Heart right ventricle (tissue), 16 donors: ENCODE measurements at regions of chr7 and their contacts with region 1.

Region 1: GRCh38 chr7:151459726-151460473 is 20.0 kb upstream of the CRYGN start:
- DNase-seq: peak; percentile 71 to 79
- ATAC-seq: peak; percentile 81 to 93 (median 89)
- H3K4me3 ChIP-seq: peak overlapping the region in 8 of 10 donors; percentile 6 to 33 (median 24)
- H3K27ac ChIP-seq: peak overlapping the region; percentile 85 to 93 (median 90)
- H3K4me1 ChIP-seq: peaks cover 16 to 33% (median 24%) of the 10 kb centered on the region in 9 donors
- H3K27me3 ChIP-seq: no peaks in the 10 kb centered on the region
- CTCF ChIP-seq: peak in 6 of 9 donors; percentile 21 to 54 (median 40)

Region 2: DNA sequence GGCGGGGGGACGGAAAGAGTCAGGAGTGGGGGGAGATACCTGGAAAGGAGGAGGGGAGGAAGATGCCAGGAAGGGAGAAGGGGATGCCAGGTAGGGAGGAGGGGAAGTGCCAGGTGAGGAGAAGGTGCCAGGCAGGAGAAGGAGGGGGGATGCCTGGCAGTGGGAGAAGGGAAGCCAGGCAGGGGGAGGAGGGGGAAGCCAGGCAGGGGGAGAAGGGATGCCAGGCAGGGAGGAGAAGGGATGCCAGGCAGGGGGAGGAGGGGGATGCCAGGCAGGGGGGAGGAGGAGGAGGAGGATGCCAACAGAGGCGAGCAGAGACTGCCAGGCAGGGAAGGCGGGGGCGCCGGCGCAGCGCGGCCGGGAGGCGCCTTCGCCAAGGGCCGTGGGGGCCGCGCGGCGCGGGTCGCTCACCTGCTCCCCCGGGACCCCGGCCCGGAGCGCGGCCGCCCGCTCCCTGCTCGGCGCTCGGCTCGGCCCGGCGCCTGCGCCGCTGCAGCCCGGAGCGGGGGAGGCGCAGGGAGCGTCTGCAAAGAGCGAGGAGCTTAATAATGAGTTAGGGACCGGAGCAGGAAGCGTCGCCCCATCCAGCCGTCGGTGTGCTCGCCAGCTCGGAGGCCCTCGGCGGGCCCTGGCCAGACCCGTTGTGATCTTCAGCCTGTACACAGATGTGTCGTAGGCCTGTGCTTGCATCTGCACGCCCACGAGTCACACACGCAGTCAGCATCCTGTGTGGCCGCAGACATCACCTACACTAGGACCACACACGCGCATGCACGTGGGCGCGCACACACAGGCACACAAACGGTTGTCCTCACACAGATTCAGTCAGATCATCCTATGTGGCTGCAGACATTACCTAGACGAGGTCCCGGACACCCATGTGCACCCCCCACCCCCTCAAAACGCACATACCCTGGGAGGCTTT is 183.0 kb before region 1 on chr7:
- intact Hi-C with region 1: no loop called
- DNase-seq: peak; percentile 42 to 51
- ATAC-seq: peak; percentile 42 to 85 (median 67)
- H3K4me3 ChIP-seq: peak overlapping the region in 9 of 10 donors; percentile 33 to 55 (median 46)
- H3K27ac ChIP-seq: no peak overlapping the region
- H3K4me1 ChIP-seq: peaks cover 0 to 33% (median 8%) of the 10 kb centered on the region in 9 donors
- H3K27me3 ChIP-seq: peaks cover 0 to 24% (median 9%) of the 10 kb centered on the region in 7 donors
- CTCF ChIP-seq: no peak

Region 3: DNA sequence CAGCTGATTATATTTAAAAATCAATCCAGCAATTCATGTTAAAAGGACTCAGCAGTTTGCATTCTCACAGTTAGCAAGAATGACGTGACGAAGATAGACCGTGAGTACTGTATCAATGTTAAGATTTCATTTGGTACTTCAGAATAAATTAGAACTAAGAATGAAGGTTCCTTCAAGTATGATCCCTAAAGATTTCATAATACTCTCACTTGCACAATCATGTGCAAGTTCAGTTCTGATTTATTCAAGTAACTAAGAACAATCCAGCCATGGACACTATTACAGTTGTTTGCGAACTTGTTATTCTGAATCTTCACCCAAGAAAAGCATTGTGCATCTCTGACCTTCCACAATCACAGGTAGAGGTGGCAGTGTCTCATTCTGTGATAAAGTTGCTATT is 52.0 kb after region 1 on chr7:
- intact Hi-C with region 1: loop called in 6 of 10 experiments (anchors 5 to 10 kb)
- DNase-seq: no peak
- ATAC-seq: peak in 1 of 8 donors; percentile 17
- H3K4me3 ChIP-seq: no peak overlapping the region
- H3K27ac ChIP-seq: peak overlapping the region in 3 of 10 donors; percentile 3 to 49 (median 6)
- H3K4me1 ChIP-seq: peaks cover 8 to 99% (median 84%) of the 10 kb centered on the region in 9 donors
- H3K27me3 ChIP-seq: no peaks in the 10 kb centered on the region
- CTCF ChIP-seq: no peak

Region 4: DNA sequence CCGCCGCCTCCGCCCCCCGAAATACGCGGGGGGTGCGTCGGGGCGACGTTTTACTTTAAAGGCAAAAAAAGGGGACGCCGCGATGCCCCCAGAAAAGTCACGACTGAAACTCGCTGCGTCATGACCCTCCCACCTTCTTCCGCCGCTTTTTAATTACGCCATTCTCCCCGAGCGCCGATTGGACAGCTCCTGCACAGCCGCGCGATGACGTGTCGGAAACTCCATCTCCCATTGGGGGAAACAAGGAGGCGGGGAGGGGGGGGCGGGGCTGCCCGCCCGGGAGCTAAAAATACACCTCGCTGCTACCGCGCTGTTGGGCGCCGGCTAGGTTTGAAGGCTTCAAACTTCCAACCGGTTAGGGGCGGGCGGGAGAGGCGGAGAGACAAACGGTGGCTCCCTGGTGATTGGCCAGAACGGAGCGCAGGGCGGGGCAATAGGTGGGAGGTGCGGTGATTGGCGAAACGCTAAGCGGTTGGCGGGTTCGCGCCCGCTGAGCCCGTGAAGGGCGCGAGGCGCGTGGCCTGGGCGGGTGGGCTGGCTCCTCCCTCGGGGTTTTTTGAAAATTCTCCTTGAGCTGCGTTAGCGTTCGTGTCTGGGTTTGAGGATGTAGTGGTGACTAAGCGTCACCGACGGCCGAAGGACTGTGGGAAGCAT is 60.0 kb after region 1 on chr7 and contains the start of gene RHEB:
- intact Hi-C with region 1: loop called in 6 of 10 experiments (anchors 2 to 10 kb)
- DNase-seq: peak; percentile 98 to 99
- ATAC-seq: peak; percentile 93 to 97 (median 97)
- H3K4me3 ChIP-seq: peak within 1 kb of the TSS; percentile 69 to 84 (median 76)
- H3K27ac ChIP-seq: peak within 1 kb of the TSS; percentile 87 to 99 (median 98)
- H3K4me1 ChIP-seq: peaks cover 2 to 45% (median 41%) of the 10 kb centered on the region in 9 donors
- H3K27me3 ChIP-seq: no peaks in the 10 kb centered on the region
- CTCF ChIP-seq: peak in 1 of 9 donors; percentile 3
- total RNA-seq, gene RHEB: 87.0 to 166 (median 104) TPM

Region 5: GRCh38 chr7:151754142-151754590 is 294.3 kb after region 1 on chr7:
- intact Hi-C with region 1: loop called in 5 of 10 experiments (anchors 5 to 10 kb)
- DNase-seq: peak; percentile 80 to 81
- ATAC-seq: peak; percentile 86 to 95 (median 91)
- H3K4me3 ChIP-seq: no peak overlapping the region
- H3K27ac ChIP-seq: peak overlapping the region; percentile 5 to 88 (median 78)
- H3K4me1 ChIP-seq: peaks cover 12 to 41% (median 25%) of the 10 kb centered on the region in 9 donors
- H3K27me3 ChIP-seq: no peaks in the 10 kb centered on the region
- CTCF ChIP-seq: peak; percentile 77 to 90 (median 85)

Region 6: DNA sequence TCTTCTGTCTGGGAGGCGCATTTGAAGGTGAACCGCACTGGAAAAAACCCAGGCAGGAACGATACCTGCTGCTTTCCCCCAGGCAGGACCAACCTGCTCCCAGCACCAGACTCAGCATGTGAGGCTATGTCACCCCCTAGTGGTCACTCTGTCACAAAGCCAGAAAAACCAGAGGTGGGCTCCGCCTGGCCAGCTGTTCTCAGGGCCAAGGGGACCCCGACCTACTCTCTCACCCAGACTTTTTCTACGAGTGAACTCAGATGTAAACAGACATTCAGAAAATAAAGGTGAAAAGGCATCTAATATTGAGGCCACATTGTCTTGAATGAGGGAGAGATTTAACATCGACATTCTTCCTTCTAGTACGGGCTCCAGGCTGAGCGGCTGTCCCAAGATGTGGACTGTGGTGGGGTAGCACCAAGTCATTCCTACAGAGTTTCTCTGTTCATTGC is 299.7 kb after region 1 on chr7:
- intact Hi-C with region 1: loop called in 5 of 10 experiments (anchors 5 to 10 kb)
- DNase-seq: peak in 1 of 2 donors; percentile 60
- ATAC-seq: peak; percentile 27 to 65 (median 51)
- H3K4me3 ChIP-seq: no peak overlapping the region
- H3K27ac ChIP-seq: no peak overlapping the region
- H3K4me1 ChIP-seq: peaks cover 9 to 37% (median 22%) of the 10 kb centered on the region in 9 donors
- H3K27me3 ChIP-seq: no peaks in the 10 kb centered on the region
- CTCF ChIP-seq: peak; percentile 76 to 95 (median 88)